ENCODE measurements at regions of chr2 and their contacts with region 1.

Region 1: DNA sequence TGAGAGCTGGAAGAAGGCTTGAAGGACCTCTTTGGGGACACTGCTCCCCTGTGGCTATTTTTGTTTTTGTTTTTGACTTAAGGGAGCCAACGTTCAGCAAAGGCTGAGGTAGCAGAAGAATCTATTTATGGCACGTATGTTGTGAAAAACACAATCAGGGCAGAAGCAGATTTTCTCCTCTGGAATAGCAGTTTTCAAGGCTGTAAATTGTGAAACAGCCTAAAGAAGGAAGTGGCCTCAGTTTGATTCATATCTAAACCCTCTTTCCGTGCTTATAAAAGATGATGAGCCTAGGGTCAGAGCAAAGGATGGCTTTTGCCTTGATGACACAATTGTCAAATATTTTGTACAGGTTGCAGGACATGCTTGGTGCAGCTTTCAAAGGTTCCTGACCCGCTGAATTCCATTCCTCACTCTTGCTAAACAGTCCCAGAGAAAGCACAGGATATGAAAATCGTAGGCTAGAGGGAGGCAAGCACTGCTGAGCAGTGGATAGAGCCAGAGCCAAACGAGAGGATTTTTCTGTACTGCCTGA is 106.2 kb upstream of the DLX2 start:
- DNase-seq: no peak
- ATAC-seq: no peak
- H3K4me3 Mint-ChIP-seq: no peak overlapping the region
- H3K27ac Mint-ChIP-seq: no peak overlapping the region
- H3K4me1 Mint-ChIP-seq: peaks cover 33% of the 10 kb centered on the region
- H3K27me3 Mint-ChIP-seq: peaks cover 3% of the 10 kb centered on the region
- CTCF ChIP-seq: no peak

Region 2: DNA sequence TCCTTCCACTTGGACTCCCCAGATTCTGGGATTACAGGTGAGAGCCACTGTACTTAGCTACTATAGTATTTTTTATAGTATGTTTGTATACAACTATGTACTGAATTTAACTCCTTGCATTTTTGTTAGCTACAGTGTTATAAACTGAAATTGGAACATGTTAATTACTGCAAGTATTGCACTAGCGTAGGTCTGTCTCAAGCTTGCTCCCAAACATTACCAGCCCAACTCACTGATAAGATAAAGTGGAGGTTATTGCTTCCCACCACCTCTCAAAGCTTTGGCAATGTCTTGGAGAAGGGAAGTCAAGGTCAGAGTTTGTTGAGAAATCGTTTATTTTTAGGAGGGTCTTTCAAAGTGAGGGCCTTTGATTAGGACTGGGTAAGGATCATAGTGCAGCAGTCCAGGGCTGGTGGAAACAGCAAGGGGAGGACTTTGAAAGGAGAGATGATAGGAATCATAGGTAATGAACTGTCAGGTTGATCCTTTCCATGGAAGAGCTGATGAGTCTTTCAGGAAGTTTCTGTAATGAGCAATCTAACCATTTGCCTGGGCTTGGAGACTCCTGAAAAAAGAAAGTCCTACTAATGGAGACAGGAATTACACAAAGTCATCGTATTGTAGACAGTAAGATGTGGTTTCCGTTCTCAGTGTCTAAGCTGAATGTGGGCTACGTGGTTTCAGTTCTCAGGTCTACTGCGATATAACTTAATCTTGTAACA is 1773.8 kb before region 1 on chr2:
- CTCF ChIA-PET with region 1: no interaction called
- POLR2A ChIA-PET with region 1: interaction called, 10 read pairs
- DNase-seq: no peak
- ATAC-seq: no peak
- H3K4me3 Mint-ChIP-seq: no peak overlapping the region
- H3K27ac Mint-ChIP-seq: peak overlapping the region; percentile 52; the same call in 1 of the 2 replicates
- H3K4me1 Mint-ChIP-seq: peaks cover 41% of the 10 kb centered on the region
- H3K27me3 Mint-ChIP-seq: peaks cover 61% of the 10 kb centered on the region
- CTCF ChIP-seq: no peak

Region 3: DNA sequence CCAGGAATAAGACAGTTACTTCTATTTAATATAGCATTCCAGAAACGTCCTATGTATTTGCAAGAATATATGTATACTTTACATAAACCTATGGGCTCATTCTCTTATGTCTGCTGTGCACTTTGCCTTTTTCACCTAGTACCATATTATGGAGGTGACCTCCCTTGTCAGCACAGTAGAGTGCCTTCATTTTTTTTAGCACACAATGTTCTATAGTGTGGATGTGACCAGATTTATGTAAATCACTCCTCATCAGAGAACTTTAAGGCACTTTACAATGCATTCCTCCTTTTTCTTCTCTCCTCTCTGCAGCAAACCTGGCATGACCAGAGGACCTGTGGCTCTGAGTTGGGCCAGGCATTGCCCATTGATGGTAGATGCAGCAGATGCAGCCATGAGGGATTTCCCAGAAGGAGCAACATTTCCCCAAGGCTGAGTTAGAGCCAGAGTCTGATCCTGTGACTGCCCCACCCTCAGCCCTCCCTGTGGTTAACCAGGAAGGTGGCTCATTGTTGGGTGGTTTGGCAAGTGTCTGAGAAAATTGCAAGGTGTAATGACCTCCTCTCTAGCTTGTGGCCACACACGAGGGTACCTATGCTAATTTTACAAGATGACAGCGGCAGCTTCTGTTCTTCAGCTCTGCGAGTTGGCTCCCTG is 29.7 kb before region 1 on chr2:
- CTCF ChIA-PET with region 1: no interaction called
- POLR2A ChIA-PET with region 1: no interaction called
- DNase-seq: no peak
- ATAC-seq: no peak
- H3K4me3 Mint-ChIP-seq: no peak overlapping the region
- H3K27ac Mint-ChIP-seq: no peak overlapping the region
- H3K4me1 Mint-ChIP-seq: peaks cover 27% of the 10 kb centered on the region
- H3K27me3 Mint-ChIP-seq: peaks cover 55% of the 10 kb centered on the region
- CTCF ChIP-seq: no peak

Measured in WTC11 (cell line).